CD4-positive, alpha-beta T cell (primary cell): ENCODE measurements at regions of chr1 and their contacts with region 1.

Region 1: GRCh38 chr1:28235755-28236655 is at the start of gene ATP5IF1:
- DNase-seq: peak; percentile 87 to 98 (median 92)
- ATAC-seq: peak; percentile 96
- H3K4me3 ChIP-seq: peak within 1 kb of the TSS; percentile 97
- H3K4me3 Mint-ChIP-seq: no peak within 1 kb of the TSS
- H3K27ac ChIP-seq: peak within 1 kb of the TSS; percentile 80 to 81
- H3K27ac Mint-ChIP-seq: no peak within 1 kb of the TSS
- H3K4me1 ChIP-seq: peaks cover 48% of the 10 kb centered on the region
- H3K4me1 Mint-ChIP-seq: peaks cover 19% of the 10 kb centered on the region
- H3K27me3 ChIP-seq: no peaks in the 10 kb centered on the region
- H3K27me3 Mint-ChIP-seq: no peaks in the 10 kb centered on the region
- CTCF ChIP-seq: no peak
- total RNA-seq, gene ATP5IF1: 77.4 to 78.0 TPM

Region 2: GRCh38 chr1:28259307-28260167 is 23.5 kb after region 1 on chr1 and contains the start of gene SESN2:
- CTCF ChIA-PET with region 1: no interaction called
- POLR2A ChIA-PET with region 1: interaction called, 10 read pairs
- intact Hi-C with region 1: no loop called
- DNase-seq: peak; percentile 98 to 99 (median 99)
- ATAC-seq: peak; percentile 98
- H3K4me3 ChIP-seq: peak within 1 kb of the TSS; percentile 98
- H3K4me3 Mint-ChIP-seq: peak within 1 kb of the TSS; percentile 91
- H3K27ac ChIP-seq: peak within 1 kb of the TSS; percentile 29 to 54
- H3K27ac Mint-ChIP-seq: peak within 1 kb of the TSS; percentile 76
- H3K4me1 ChIP-seq: peaks cover 72% of the 10 kb centered on the region
- H3K4me1 Mint-ChIP-seq: peaks cover 46% of the 10 kb centered on the region
- H3K27me3 ChIP-seq: no peaks in the 10 kb centered on the region
- H3K27me3 Mint-ChIP-seq: no peaks in the 10 kb centered on the region
- CTCF ChIP-seq: no peak
- total RNA-seq, gene SESN2: 8.8 to 9.6 TPM

Region 3: DNA sequence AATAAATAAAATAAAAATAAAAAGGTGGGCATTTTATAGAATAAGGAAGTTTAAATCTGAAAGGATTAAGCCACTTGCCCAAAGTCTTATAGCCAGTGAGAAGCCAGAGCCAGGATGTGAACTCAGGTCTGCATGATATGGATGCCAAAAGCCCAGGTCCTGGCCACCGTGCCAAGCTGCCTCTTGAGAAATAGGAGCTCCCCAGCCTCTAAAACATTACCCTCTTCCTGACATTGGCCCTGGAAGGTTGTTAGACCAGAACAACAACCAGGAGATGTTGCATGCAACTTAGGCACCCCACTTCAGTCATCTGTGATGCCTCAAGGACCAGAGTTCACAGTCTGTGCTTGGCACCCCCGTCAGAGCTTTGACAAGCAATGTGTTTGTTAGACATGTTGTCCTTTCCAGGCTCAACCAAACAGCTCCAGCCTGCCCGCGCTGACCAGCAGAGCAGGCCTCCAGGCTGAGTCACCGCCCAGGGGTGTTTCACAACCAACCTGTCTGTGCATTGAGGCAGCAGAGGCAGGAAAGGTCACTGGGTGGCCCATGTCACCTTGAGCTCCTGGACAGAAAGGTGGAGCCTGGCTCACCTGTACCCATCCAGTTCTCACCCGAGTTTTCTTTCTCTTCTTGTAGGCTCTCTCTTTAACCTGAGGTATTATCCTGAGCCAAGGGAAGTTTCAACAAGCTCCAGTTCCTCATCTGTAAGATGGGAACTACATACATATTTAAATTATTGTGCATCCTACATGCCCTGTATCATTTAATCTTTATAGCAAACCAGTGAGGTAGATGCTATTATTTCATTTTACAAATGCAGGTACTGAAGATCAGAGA is 77.9 kb after region 1 on chr1:
- CTCF ChIA-PET with region 1: no interaction called
- POLR2A ChIA-PET with region 1: no interaction called
- intact Hi-C with region 1: no loop called
- DNase-seq: peak in 3 of 14 experiments; percentile 2 to 64 (median 55)
- ATAC-seq: no peak
- H3K4me3 ChIP-seq: no peak overlapping the region
- H3K4me3 Mint-ChIP-seq: no peak overlapping the region
- H3K27ac ChIP-seq: no peak overlapping the region
- H3K27ac Mint-ChIP-seq: no peak overlapping the region
- H3K4me1 ChIP-seq: no peaks in the 10 kb centered on the region
- H3K4me1 Mint-ChIP-seq: no peaks in the 10 kb centered on the region
- H3K27me3 ChIP-seq: no peaks in the 10 kb centered on the region
- H3K27me3 Mint-ChIP-seq: no peaks in the 10 kb centered on the region
- CTCF ChIP-seq: no peak

Region 4: DNA sequence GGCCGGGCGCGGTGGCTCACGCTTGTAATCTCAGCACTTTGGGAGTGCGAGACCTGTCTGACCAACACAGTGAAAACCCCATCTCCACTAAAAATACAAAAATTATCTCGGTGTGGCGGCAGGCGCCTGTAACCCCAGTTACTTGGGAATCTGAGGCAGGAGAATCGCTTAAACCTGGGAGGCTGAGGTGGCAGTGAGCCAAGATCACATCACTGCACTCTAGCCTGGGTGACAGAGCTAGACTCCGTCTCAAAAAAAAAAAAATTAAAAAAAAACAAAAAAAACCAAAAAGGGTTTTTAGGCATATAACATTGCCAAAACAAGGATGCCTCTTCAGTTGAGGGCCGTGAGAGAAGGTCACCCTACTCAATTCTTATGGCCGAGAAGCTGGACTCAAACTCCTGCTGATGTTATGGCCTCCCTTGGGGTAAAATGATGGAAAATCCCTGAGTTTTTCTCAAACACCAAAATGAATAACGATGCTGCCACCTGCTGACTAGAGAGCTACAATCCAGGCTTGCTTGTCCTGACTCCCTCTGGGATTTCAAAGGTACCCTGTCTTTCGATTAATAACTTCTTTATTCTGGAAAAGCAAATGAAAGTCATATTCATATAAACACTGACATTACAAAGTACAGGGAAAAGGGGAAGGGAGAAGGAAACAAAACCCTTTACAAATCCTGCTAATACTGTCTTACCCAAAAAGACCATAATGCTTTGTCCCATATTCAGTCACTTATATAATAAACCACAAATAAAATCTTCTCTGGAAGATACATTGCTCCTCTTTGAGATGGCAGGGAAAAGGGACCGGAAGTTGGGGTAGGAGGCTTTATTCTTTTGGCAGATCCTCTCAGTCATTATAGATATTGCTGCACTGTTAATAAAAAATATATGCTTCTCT is 366.8 kb after region 1 on chr1:
- CTCF ChIA-PET with region 1: no interaction called
- POLR2A ChIA-PET with region 1: no interaction called
- intact Hi-C with region 1: no loop called
- DNase-seq: peak in 6 of 14 experiments; percentile 11 to 65 (median 48)
- ATAC-seq: no peak
- H3K4me3 ChIP-seq: no peak overlapping the region
- H3K4me3 Mint-ChIP-seq: no peak overlapping the region
- H3K27ac ChIP-seq: no peak overlapping the region
- H3K27ac Mint-ChIP-seq: no peak overlapping the region
- H3K4me1 ChIP-seq: peaks cover 3% of the 10 kb centered on the region
- H3K4me1 Mint-ChIP-seq: no peaks in the 10 kb centered on the region
- H3K27me3 ChIP-seq: no peaks in the 10 kb centered on the region
- H3K27me3 Mint-ChIP-seq: no peaks in the 10 kb centered on the region
- CTCF ChIP-seq: peak; percentile 67